ENCODE measurements at regions of chr7 and their contacts with region 1.

Region 1: GRCh38 chr7:112272921-112273561 is 66.5 kb downstream of the ZNF277 start:
- DNase-seq: no peak
- ATAC-seq: no peak
- H3K4me3 ChIP-seq: no peak overlapping the region
- H3K27ac ChIP-seq: no peak overlapping the region
- H3K4me1 ChIP-seq: no peaks in the 10 kb centered on the region
- H3K27me3 ChIP-seq: no peaks in the 10 kb centered on the region
- CTCF ChIP-seq: no peak

Region 2: GRCh38 chr7:113394856-113395255 is 1121.8 kb after region 1 on chr7:
- intact Hi-C with region 1: loop called in 1 of 2 experiments (anchors 5 kb)
- DNase-seq: no peak
- ATAC-seq: no peak
- H3K4me3 ChIP-seq: no peak overlapping the region
- H3K27ac ChIP-seq: no peak overlapping the region
- H3K4me1 ChIP-seq: peaks cover 3% of the 10 kb centered on the region
- H3K27me3 ChIP-seq: no peaks in the 10 kb centered on the region
- CTCF ChIP-seq: no peak